ENCODE measurements at regions of chr14 and their contacts with region 1.

Region 1: DNA sequence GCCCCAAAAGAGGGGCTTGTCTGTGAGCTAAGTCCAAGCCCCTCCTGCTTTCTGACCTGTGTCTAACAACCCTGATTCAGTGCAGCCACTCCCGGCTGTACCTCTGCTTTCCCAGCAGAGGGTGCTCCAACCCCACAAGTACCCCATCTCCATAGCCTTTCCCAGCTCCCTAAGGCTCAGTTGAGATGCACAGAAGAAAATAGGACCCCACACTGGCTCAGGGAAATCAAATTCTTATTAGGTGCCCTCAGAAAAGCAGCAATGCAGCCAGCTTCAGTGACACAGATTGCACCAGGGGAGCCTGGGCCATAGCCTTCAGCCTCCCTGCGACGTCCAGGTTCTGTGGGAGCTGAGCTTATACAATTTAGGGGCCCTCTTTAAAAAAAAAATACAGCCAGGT is 49.9 kb downstream of the LRRC74A start:
- DNase-seq: no peak
- H3K4me3 ChIP-seq: no peak overlapping the region
- H3K27me3 ChIP-seq: peaks cover 1% of the 10 kb centered on the region; the same call in 1 of the 2 replicates
- CTCF ChIP-seq: peak; percentile 93

Region 2: GRCh38 chr14:76904740-76905438 is 28.8 kb after region 1 on chr14:
- CTCF ChIA-PET with region 1: interaction called, 28 read pairs
- POLR2A ChIA-PET with region 1: no interaction called
- DNase-seq: peak; percentile 89
- H3K4me3 ChIP-seq: peak overlapping the region; percentile 16
- H3K27me3 ChIP-seq: no peaks in the 10 kb centered on the region
- CTCF ChIP-seq: no peak

Region 3: DNA sequence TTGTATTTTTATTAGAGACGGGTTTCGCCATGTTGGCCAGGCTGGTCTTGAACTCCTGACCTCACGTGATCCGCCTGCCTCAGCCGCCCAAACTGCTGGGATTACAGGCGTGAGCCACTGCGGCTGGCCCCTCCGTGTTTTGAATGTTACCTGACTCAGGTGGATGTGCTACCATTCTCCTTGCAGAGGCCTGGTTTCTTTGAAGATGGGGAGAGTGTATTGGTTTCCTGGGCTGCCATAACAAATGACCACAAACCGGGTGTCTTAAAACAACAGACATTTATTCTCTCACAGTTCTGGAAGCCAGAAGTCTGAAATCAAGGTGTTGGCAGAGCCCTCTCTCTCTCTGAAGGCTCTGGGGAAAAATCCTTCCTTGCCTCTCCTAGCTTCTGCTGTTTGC is 54.5 kb after region 1 on chr14:
- CTCF ChIA-PET with region 1: no interaction called
- POLR2A ChIA-PET with region 1: no interaction called
- DNase-seq: no peak
- H3K4me3 ChIP-seq: no peak overlapping the region
- H3K27me3 ChIP-seq: no peaks in the 10 kb centered on the region
- CTCF ChIP-seq: no peak

Region 4: DNA sequence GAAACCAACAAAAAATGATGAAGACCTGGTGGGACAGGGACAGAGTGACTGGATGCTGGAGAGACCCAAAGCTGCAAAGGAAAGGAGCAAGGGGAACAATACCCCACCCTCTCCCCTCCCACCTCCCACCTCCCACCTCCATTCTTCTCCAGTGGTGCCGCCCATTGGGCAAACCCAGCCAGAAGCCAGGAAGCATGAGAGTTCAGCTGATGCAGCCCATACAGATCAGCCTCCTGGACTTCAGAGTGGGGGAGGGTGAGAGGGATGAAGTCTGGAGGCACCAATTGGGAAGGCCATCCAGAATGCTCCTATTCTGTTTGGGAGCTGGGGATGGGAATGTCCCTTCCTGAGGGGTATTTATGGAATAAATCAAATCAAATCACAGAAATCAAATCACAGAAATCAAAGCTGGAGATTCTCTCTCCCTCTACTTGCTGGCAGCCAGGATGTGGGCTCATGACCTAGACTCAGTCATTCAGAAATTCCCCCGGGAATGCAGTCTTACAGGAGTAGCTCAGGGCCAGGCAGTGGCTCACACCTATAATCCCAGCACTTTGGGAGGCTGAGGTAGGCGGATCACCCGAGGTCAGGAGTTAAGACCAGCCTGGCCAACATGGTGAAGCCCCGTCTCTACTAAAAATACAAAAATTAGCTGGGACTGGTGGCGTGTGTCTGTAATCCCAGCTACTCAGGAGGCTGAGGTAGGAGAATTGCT is 121.3 kb after region 1 on chr14:
- CTCF ChIA-PET with region 1: no interaction called
- POLR2A ChIA-PET with region 1: no interaction called
- DNase-seq: no peak
- H3K4me3 ChIP-seq: no peak overlapping the region
- H3K27me3 ChIP-seq: no peaks in the 10 kb centered on the region
- CTCF ChIP-seq: no peak

Region 5: DNA sequence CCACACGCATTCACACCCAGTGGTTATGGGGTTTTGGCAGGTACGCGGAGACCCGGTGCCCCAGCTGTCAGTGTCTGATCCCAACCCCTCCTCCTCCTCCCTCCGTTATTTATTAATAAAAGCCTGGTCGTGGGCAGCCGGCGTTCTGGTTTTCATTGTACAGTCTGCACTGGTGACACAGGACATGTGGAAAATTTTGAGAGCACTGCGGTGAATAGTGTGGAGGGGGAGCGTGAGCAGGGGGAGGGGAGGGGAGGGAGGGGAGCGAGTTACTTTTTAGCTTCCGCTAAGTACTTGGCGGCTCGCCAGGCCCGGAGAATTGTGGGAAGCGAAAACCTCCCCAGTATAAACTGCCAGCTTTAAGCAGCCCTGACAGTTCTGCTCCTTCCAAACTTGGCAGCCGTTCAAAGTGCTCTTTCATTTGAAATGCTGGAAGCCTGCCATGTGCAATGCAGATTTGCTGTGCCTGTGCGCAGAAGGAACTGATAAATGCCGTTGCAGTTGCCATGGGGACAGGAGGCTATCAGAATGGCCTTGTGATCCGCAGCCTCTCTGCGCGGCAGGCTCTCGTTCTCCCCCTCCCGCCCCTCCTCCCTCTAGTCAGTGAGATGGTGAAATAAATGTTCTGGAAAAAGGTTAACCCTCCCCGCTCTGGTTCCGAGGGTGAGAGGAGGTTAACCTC is 164.1 kb after region 1 on chr14:
- CTCF ChIA-PET with region 1: interaction called, 10 read pairs
- POLR2A ChIA-PET with region 1: no interaction called
- DNase-seq: peak; percentile 94
- H3K4me3 ChIP-seq: peak overlapping the region; percentile 22
- H3K27me3 ChIP-seq: no peaks in the 10 kb centered on the region
- CTCF ChIP-seq: no peak

Region 6: GRCh38 chr14:77059276-77059915 is 183.3 kb after region 1 on chr14:
- CTCF ChIA-PET with region 1: interaction called, 58 read pairs
- POLR2A ChIA-PET with region 1: no interaction called
- DNase-seq: peak; percentile 67
- H3K4me3 ChIP-seq: no peak overlapping the region
- H3K27me3 ChIP-seq: no peaks in the 10 kb centered on the region
- CTCF ChIP-seq: peak; percentile 46

Region 7: DNA sequence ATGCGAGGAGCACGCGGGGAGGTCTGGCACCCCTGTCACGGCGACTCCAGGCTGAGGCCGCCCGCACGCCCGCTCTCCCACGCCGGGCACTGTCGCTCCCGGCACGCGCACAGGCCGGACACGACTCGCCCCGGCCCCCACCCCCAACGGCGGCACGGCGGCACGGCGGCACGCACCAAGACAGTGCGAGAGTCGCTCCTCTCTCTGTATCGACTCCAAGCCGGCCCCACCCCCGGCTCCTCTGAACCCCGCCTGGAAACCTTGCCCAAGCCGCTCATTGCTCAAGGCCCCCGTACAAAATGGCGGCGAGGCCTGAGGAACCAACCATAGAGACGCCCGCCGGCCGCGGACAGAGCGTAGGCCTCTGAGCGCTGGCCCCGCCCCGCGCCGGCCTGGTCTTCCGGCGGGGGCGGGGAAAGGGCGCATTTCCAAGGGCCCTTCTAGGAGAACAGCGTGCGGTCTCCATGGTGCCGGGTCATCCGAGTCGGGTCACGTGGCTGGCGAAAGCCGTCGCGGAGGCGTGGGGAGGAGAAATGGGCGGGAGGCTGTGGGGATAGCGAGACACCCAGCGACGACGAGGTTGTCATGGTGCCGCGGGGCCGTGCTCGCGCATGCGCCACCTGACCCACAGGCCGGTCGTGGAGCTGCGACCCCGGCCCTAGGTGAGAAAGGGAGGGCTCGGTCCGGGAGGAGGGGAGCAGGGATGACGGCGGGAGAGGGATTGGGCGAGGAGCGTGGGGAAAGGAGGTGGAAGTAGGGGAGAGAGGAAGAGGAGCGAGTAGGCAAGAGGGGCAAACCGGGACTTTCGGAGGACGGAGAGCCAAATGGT is 221.8 kb after region 1 on chr14 and contains the start of gene CIPC:
- CTCF ChIA-PET with region 1: interaction called, 333 read pairs
- POLR2A ChIA-PET with region 1: no interaction called
- DNase-seq: peak; percentile 87
- H3K4me3 ChIP-seq: peak within 1 kb of the TSS; percentile 90
- H3K27me3 ChIP-seq: no peaks in the 10 kb centered on the region
- CTCF ChIP-seq: no peak
- polyA plus RNA-seq, gene CIPC: 14.2 and 15.5 TPM in 2 replicates

Region 8: DNA sequence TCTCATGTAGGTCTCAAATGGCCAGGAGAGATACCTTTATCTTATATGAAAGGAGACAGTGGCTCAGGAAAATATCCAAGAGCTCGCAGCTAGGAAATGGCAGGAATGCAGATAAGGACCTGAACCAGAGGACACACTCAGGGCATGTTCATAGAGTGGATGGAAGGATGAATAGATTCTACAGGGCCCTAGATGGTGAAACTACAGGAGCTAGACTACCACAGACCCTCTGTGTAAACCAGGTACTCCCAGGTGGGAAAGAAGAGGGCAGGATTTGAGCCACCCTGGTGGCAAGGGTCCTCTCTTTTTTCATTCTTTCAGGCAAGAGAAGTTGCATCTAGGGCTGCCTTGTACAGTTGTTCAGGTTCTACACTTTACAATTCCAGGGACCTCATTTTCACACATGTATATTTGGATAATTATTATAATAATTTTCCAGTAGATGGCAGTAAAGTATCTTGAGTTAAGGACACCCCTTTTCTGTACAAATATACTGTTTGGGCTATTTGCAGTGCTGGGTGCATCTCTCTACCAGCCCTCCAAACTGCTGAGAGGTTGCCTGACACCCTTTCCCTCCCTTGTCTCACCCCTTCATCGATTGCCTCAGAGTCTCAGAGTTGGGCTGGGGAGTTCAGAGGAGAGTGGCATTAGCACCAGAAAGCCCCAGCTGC is 276.0 kb after region 1 on chr14:
- CTCF ChIA-PET with region 1: interaction called, 17 read pairs
- POLR2A ChIA-PET with region 1: no interaction called
- DNase-seq: no peak
- H3K4me3 ChIP-seq: no peak overlapping the region
- H3K27me3 ChIP-seq: peaks cover 15% of the 10 kb centered on the region
- CTCF ChIP-seq: peak; percentile 11; the same call in 1 of the 2 replicates